ENCODE measurements at regions of chr4 and their contacts with region 1.

Region 1: DNA sequence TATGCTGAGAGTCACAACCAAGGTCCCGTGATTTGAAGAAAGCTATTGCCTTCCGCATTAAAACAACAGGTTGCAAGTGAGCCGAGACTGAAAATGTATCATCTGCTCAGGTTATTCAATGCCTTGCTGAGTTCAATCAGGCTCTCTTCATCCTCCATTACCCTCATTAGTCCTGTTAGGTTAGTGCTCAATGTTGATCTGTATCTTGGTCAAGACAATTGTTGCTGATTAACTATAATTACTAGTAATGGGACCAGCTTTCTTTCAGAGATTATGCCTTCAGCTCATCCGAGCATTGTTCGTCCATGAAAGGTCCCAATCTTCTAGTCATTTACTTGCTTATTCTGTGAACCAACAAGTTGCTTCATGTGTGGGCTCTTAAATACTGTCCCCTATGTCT is 534.6 kb upstream of the FAM241A start:
- DNase-seq: no peak
- ATAC-seq: no peak
- H3K4me3 ChIP-seq: no peak overlapping the region
- H3K27ac ChIP-seq: no peak overlapping the region
- H3K4me1 ChIP-seq: no peaks in the 10 kb centered on the region
- H3K27me3 ChIP-seq: no peaks in the 10 kb centered on the region
- CTCF ChIP-seq: no peak
- POLR2A ChIP-seq: no peak
- RAD21 ChIP-seq: no peak

Region 2: GRCh38 chr4:111449657-111450056 is 161.0 kb before region 1 on chr4:
- CTCF ChIA-PET with region 1: no interaction called
- POLR2A ChIA-PET with region 1: no interaction called
- dilution Hi-C with region 1: no loop called
- in situ Hi-C with region 1: no loop called
- intact Hi-C with region 1: loop called (anchors 5 kb)
- DNase-seq: peak; percentile 2
- ATAC-seq: no peak
- H3K4me3 ChIP-seq: no peak overlapping the region
- H3K27ac ChIP-seq: no peak overlapping the region
- H3K4me1 ChIP-seq: no peaks in the 10 kb centered on the region
- H3K27me3 ChIP-seq: no peaks in the 10 kb centered on the region
- CTCF ChIP-seq: no peak
- POLR2A ChIP-seq: no peak
- RAD21 ChIP-seq: no peak

Measured in IMR-90 (cell line).